Psoas muscle (tissue), 8 donors: ENCODE measurements at regions of chr9 and their contacts with region 1.

Region 1: DNA sequence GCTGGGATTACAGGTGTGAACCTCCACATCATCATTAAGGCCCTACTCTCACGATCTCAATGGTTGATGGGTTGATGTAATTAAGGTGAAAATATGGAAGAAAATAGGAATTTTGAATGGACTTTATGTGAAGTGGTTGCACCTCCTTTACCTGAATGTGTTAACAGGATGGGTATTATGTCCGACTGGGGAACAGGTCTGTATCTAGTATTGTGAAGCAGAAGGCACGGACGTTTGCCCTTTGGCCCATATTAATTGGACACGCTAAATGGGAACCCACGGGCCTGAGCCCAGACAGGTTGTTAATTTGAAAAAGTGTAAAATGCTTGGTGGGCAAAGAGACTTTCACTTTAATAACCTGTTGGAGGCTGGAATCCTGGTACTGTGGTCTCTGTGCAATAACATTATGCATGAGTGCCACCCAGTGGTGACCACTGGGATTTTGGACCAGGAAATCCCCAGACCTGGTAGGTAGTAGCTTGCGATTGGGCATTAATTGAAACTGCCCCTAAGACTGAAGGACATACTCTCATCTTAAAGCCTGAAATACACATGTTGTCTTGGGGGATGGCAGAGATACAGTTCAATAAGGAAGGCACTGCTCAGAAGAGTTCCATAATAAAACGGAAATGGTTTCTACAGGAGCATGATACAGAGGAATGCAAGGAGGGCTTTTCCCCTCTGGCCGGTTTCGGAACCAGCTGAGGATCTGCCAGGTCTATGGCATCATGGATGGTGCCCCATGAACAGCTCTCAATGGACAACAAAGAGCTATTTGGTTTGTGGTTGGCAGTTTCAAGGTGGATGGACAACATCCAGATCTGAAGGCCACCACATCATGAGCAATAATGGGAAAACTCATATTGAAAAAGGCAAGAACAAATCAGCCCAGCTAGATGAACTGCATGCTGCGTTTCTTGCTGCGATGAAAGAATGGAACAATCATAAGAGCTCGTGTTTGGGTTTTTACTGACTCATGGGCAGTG is 26.2 kb upstream of the BICD2 start:
- DNase-seq: peak; percentile 78 to 80
- ATAC-seq: peak; percentile 91 to 99 (median 95)
- H3K4me3 ChIP-seq: no peak overlapping the region
- H3K27ac ChIP-seq: no peak overlapping the region
- H3K4me1 ChIP-seq: peaks cover 4% of the 10 kb centered on the region
- H3K27me3 ChIP-seq: peaks cover 0 to 3% (median 0%) of the 10 kb centered on the region in 3 donors
- CTCF ChIP-seq: peak; percentile 85

Region 2: GRCh38 chr9:92716557-92716956 is 74.3 kb before region 1 on chr9:
- intact Hi-C with region 1: loop called (anchors 1 to 5 kb)
- DNase-seq: peak; percentile 63 to 79
- ATAC-seq: peak; percentile 58 to 82 (median 66)
- H3K4me3 ChIP-seq: no peak overlapping the region
- H3K27ac ChIP-seq: no peak overlapping the region
- H3K4me1 ChIP-seq: no peaks in the 10 kb centered on the region
- H3K27me3 ChIP-seq: no peaks in the 10 kb centered on the region
- CTCF ChIP-seq: peak; percentile 90

Region 3: DNA sequence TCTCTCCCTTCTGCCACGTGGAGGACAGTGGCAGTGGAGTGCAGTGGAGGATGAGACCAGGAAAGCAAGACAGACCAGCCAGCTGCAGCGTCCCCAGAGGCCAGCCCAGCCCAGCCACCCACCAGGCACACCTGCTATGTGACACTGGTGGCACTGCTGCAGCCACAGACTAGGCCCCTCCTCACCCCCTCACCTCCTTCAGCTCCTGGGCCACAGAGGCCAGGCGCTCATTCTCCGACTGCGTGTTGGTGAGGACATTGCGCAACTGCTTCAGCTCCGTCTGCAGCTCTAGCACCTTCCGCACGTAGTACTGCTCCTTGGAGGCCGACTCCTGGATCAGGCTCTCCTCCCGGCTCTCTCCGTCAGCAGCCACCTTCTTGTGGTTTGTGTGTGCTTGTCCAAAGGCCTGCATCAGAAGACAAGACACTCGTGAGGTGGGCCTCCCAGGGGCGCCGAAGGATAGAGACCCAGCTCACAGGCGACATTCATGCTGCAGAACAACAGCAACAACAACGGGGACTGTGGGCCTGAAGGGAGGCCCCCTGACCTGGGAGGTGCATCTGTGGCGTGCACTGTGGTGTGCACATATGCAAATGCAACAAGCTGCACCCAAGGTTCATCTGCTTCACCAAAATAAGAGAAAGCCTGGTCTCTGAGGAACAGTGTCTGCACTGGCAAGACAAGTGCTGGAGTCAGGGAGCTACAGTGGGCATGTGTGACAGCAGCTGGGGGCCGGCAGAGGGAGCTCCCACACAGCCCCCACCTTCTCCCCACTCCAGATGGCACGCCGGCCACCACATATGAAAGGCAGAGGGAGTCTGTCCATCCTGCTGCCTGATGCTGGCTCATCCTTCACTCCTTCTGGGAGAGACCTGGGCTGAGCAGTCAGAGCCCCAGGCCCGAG is 61.8 kb before region 1 on chr9:
- intact Hi-C with region 1: loop called (anchors 2 kb)
- DNase-seq: peak in 1 of 2 donors; percentile 68
- ATAC-seq: peak; percentile 81 to 92 (median 86)
- H3K4me3 ChIP-seq: no peak overlapping the region
- H3K27ac ChIP-seq: no peak overlapping the region
- H3K4me1 ChIP-seq: peaks cover 4% of the 10 kb centered on the region
- H3K27me3 ChIP-seq: no peaks in the 10 kb centered on the region
- CTCF ChIP-seq: peak; percentile 65

Region 4: DNA sequence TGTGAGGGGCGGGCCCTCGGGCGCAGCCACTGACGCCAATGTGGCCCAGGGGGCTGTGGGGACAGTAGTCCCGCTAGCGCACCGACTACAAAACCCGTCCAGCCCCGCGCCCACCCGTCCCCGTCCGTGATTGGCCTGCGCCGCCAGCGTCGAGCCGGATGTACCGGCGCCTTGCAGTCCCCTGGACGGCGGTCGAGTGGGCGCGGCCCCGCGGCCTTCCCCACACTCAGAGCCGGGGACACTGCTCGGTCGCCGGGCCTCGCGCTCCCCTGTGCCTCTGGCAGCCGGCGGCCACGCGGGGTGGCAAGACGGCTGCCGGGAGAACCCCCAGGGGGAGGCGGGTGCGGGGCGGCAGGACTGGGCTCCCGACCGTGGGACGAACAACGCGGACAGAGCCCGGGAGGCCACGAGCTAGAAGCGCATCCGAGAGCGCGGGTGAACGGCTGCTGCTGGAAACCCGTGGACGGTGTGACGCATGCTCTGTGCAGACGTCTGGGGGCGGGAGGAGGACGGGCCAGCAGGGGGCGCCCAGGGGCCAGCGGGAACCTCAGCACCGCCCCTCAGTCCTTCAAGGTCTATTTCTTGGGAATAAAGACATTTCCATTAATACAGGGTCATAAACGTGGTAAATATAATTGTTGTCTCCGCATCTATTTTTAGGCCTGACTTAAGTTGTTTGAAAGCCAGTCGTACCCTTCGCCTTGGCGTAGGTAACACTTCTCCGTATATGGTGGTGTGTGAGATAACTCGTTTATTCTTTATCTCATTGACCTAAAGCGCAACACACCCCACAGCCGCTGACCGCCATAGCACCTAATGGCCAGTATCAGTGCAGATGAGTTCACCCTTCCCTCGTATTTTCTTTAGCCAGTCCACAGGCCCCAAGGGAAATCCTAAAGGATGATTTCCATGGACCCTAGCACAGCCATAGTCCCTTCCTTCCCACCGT is 25.6 kb before region 1 on chr9:
- intact Hi-C with region 1: loop called in 1 of 2 experiments (anchors 1 kb)
- DNase-seq: peak; percentile 99
- ATAC-seq: peak; percentile 95 to 96 (median 96)
- H3K4me3 ChIP-seq: peak overlapping the region; percentile 95
- H3K27ac ChIP-seq: peak overlapping the region; percentile 99
- H3K4me1 ChIP-seq: peaks cover 42% of the 10 kb centered on the region
- H3K27me3 ChIP-seq: no peaks in the 10 kb centered on the region
- CTCF ChIP-seq: peak; percentile 94

Region 5: GRCh38 chr9:92860867-92861266 is 70.0 kb after region 1 on chr9:
- intact Hi-C with region 1: no loop called
- DNase-seq: no peak
- ATAC-seq: no peak
- H3K4me3 ChIP-seq: no peak overlapping the region
- H3K27ac ChIP-seq: no peak overlapping the region
- H3K4me1 ChIP-seq: no peaks in the 10 kb centered on the region
- H3K27me3 ChIP-seq: no peaks in the 10 kb centered on the region
- CTCF ChIP-seq: no peak

Region 6: DNA sequence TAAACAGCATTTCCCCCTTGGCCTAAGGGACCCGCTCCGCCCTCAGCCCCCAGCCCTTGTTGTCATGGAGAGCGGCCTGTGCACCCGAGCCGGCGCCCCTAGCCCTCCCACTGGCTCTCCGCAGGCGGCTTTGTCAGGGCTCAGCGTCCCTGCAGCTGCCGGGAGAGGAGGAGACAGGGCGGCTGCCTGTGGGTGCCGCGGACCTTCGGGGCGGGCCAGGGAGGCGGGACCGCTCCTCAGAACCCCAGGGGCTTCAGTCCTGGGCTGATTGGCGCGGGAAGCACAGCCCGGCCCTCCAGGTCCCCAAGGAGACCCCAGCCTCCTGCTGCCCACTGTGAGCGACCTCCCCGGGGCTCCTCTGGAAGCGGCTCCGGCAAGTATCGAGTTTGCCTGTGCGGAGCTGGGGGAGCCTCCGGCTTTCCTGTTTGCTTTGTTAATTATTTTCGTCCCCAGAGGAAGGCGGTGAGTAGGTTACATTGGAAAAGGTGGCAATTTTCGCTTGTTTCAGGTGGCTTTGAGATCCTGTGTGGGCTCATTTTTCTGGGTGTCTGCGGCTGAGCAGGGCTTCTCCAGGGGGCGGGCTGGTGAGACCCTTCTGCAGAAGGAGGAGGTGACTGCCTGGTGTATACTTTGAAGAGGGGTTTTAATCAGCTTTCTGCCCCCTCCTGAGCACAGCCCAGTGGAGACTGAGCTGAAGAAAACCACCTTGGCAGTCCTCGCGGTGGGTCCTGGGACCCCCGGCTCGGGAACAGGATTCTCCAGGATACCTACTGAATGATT is 156.6 kb after region 1 on chr9 and contains the start of gene FGD3:
- intact Hi-C with region 1: no loop called
- DNase-seq: no peak
- ATAC-seq: peak in 3 of 4 donors; percentile 39 to 59 (median 40)
- H3K4me3 ChIP-seq: peak within 1 kb of the TSS; percentile 72
- H3K27ac ChIP-seq: no peak within 1 kb of the TSS
- H3K4me1 ChIP-seq: peaks cover 10% of the 10 kb centered on the region
- H3K27me3 ChIP-seq: peaks cover 0 to 11% (median 0%) of the 10 kb centered on the region in 3 donors
- CTCF ChIP-seq: no peak
- total RNA-seq, gene FGD3: 1.2 to 2.5 (median 1.8) TPM